ENCODE measurements at regions of chr1 and their contacts with region 1.

Region 1: DNA sequence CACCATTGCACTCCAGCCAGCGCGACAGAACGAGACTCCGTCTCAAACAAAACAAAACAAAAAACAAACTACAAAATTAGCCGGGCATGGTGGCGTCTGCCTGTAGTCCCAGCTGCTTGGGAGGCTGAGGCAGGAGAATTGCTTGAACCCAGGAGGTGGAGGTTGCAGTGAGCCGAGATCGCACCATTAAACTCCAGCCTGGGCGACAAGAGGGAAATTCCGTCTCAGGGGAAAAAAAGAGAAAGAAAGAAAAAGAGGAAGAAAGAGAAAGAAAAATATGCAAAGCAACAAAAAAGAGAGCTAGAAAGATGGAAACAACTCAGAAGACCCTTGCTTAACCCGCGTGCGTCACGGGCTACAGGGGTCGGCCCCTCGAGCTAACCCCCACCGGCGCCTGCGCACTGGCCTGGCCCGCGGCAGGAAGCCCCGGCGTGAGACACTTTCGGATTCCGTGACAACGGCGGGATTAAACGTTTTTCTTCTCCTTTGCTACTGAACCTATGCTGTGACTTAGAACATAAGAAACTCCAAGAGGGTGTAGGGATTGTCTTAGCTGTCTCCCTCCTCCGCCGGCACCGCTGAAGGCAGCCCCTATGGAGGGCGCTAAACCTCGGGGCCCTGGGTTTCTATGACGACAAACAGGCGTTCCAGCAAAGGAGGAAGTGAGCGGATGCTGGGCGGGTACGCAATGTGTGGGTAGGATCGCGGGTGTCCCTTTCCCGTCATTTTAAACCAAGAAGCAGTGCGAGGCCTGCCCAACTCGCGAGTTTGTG is at the start of gene AXDND1:
- DNase-seq: peak; percentile 68 to 93 (median 84)

Region 2: DNA sequence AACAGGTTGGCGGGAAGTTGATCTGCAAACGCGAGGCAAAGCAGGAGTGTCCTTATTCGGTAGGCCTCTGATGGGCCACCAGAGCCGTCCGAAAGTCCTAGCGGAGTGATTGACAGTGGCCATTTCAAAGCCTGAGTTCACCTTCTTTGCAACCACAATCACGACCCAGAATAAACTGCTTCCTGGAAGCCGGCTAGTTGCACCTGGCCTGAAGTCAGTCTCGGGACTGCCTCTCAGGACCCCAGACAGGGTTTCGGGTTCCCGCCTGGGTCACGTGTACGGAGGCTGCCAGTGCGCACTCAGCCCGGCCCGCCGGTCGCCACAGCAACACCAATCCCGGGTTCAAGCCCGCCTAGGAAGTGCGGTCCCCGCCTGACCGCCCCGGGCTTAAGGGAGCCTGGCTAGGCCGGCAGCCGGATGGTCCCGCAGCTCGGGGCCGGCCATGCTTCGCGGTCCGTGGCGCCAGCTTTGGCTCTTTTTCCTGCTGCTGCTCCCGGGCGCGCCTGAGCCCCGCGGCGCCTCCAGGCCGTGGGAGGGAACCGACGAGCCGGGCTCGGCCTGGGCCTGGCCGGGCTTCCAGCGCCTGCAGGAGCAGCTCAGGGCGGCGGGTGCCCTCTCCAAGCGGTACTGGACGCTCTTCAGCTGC is 283.7 kb before region 1 on chr1 and contains the start of gene TOR3A:
- intact Hi-C with region 1: loop called (anchors 5 kb)
- DNase-seq: peak; percentile 86 to 98 (median 95)

Region 3: GRCh38 chr1:179121159-179121938 is 244.2 kb before region 1 on chr1:
- intact Hi-C with region 1: loop called (anchors 5 kb)
- DNase-seq: peak in 36 of 42 donors; percentile 4 to 83 (median 49)

Region 4: DNA sequence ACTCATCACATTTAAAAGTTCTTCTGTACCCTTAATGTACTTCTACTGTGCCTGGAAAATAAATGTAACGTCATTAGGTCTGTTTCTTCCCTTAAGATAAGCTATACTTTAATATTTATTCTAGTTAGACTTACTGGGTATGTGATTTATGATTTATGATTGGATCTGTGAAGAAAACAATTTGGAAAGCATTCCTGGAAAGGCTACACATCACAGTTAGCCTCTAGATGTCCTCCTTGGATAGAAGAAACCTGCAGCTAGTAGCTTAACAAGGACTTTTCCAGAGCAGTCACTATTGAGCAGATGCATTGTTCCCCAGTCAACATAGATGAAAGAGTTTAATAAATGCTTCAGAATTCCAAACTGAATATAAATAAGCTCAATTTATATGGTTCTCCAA is 113.8 kb before region 1 on chr1:
- intact Hi-C with region 1: loop called (anchors 10 kb)
- DNase-seq: no peak

Region 5: DNA sequence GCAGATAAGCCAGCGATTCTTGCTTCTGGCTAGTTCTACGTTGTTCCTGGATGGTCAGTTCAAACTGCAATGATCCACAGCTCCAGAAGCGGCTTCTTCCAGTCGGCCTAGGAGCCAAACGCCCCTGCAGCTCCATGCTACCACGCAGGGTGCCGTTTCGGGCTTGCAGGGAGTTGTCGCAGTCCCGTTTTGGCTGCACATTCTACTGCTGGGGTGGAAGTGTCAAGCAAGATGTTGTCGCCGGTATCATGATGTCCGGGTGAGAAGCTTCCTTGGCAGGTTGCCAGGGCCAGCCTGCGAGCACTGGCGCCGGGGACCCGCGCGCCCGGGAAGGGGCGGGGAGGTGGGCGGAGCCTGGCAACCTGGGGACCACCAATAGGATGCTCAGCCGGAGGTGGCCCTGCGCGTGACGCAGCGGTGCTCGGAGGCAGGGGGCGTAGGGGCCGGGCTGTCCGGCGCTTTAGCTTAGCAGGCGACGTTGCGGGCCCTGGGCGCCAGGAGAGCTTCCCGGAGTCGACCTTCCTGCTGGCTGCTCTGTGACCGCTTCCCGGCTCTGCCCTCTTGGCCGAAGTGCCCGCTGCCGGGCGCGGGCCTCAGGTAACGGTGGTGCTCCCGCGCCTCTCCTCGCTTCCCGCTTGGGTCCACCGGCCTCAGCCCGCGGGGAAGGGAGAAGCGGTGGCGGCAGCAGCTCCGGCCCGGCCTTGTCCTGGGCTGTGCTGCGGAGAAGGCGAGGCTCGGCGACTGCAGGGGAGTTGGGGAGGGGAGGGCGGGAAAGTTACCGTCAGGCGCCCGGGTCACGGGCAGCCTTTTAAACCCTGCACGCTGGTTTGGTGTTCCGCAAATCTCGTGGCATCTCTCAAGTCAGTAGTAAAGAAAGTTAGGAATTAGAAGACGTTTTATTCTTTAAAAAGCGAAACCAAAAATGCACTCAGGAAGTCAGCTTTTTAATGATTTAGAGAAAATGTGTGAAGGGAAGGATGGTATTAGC is 71.9 kb before region 1 on chr1 and contains the start of gene SOAT1:
- intact Hi-C with region 1: loop called (anchors 10 kb)
- DNase-seq: peak; percentile 88 to 98 (median 96)

Region 6: GRCh38 chr1:179310721-179311120 is 54.8 kb before region 1 on chr1:
- intact Hi-C with region 1: no loop called
- DNase-seq: no peak

Region 7: DNA sequence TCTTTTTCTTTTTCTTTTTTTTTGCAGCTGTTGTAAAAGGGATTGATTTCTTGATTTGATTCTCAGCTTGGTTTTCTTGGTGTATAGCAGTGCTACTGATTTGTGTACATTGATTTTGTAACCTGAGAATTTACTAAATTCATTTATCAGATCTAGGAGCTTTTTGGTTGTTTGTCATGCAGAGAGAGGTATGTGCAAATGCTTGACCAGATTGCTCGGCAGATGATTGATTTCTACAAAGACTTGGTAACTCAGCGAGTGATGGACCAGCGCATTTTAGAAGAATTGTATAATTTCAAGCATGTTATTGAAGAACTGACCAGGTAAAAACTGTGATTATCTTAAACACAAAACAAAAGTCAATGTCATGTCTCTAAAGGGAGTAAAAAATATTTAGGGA is 28.2 kb after region 1 on chr1:
- intact Hi-C with region 1: no loop called
- DNase-seq: no peak

Region 8: GRCh38 chr1:179476484-179476883 is 111.0 kb after region 1 on chr1:
- intact Hi-C with region 1: no loop called
- DNase-seq: no peak